ENCODE measurements at regions of chr11 and their contacts with region 1.

Region 1: GRCh38 chr11:65213322-65214211 is 31.8 kb downstream of the CAPN1 start:
- DNase-seq: no peak
- H3K4me3 ChIP-seq: no peak overlapping the region
- H3K27me3 ChIP-seq: no peaks in the 10 kb centered on the region
- CTCF ChIP-seq: no peak

Region 2: DNA sequence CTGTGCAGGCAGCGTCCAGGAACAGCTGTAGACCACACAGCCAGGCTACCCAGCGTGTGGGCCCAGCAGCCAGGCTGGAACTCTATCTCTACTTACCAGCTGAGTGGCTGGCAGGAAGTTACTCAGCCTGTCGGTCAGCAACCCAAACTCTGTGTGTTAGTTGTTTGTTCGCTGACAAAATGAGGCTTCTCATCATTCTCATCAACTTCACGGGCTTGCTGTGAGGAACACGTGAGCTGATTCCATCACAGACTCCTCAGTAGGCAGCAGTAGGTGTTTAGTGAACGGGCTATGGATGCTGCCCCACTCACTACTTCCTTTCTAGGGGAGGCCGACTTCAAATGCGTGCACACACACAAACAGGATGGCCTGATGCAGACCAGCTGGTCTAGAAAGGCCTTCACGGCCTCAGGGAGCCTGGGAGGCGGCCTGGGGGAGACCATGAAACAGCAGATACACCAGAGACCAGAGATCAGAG is 44.4 kb before region 1 on chr11:
- CTCF ChIA-PET with region 1: no interaction called
- POLR2A ChIA-PET with region 1: no interaction called
- DNase-seq: no peak
- H3K4me3 ChIP-seq: no peak overlapping the region
- H3K27me3 ChIP-seq: no peaks in the 10 kb centered on the region
- CTCF ChIP-seq: no peak

Region 3: DNA sequence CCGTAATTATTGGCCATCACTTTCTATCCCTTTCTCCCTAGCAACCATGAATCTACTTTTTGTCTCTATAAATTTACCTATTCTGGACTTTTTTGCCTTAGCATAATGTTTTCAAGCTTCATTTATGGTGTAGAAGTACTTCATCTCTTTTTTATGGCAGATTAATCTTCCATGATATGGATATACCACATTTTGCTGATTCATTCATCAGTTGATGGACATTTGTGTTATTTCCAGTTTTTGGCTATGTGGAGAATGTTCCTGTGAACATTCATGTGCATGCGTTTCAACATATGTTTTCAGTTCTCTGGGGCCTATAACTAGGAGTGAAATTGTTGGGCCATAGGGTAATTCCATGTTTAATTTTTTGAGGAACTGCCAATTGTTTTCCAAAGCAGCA is 19.0 kb before region 1 on chr11:
- CTCF ChIA-PET with region 1: interaction called, 11 read pairs
- POLR2A ChIA-PET with region 1: no interaction called
- DNase-seq: no peak
- H3K4me3 ChIP-seq: no peak overlapping the region
- H3K27me3 ChIP-seq: no peaks in the 10 kb centered on the region
- CTCF ChIP-seq: no peak

Measured in BJ (cell line).